Left ventricle myocardium inferior (tissue), 1 donor: ENCODE measurements at regions of chr5 and their contacts with region 1.

Region 1: DNA sequence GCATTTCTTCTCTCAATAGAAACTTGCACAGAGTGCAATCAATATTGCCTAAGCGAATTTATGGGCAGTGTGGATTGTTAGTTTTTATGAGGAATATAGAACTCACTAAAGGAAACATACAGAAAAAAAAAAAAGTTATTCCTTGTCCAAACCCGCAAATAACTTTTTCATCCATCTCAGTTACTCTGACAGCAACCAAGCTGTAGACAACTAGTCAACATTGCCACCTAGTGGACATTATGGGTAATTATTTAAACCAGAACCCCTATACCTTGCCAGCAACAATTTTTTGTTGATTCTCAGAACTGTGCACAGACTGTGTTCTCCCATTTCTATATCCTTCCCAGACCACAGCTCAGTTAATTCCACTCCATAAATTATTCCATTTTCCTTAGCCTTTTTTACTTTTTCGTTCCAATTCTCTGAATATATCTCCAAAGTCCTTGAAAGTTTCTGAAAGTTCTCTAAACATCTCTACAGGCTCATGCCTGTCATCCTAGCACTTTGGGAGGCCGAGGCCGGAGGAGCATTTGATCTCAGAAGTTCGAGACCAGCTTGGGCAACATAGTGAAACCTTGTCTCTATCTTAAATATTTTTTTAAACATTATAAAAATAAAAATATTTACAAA is 2.6 kb upstream of the AFAP1L1 start:
- DNase-seq: no peak
- H3K4me3 ChIP-seq: no peak overlapping the region
- H3K27ac ChIP-seq: no peak overlapping the region
- H3K4me1 ChIP-seq: peaks cover 23% of the 10 kb centered on the region
- H3K27me3 ChIP-seq: no peaks in the 10 kb centered on the region
- CTCF ChIP-seq: peak; percentile 78

Region 2: GRCh38 chr5:149317281-149318048 is 48.4 kb after region 1 on chr5:
- intact Hi-C with region 1: loop called (anchors 10 kb)
- DNase-seq: no peak
- H3K4me3 ChIP-seq: no peak overlapping the region
- H3K27ac ChIP-seq: peak overlapping the region; percentile 78
- H3K4me1 ChIP-seq: peaks cover 50% of the 10 kb centered on the region
- H3K27me3 ChIP-seq: no peaks in the 10 kb centered on the region
- CTCF ChIP-seq: peak; percentile 71